Calu3 (cell line): ENCODE measurements at regions of chr22 and their contacts with region 1.

Region 1: GRCh38 chr22:24175160-24175808 is 6.0 kb upstream of the SUSD2 start:
- DNase-seq: peak; percentile 88
- H3K4me3 Mint-ChIP-seq: no peak overlapping the region
- H3K27ac Mint-ChIP-seq: no peak overlapping the region
- H3K4me1 Mint-ChIP-seq: no peaks in the 10 kb centered on the region
- H3K27me3 Mint-ChIP-seq: no peaks in the 10 kb centered on the region
- CTCF ChIP-seq: peak; percentile 90

Region 2: DNA sequence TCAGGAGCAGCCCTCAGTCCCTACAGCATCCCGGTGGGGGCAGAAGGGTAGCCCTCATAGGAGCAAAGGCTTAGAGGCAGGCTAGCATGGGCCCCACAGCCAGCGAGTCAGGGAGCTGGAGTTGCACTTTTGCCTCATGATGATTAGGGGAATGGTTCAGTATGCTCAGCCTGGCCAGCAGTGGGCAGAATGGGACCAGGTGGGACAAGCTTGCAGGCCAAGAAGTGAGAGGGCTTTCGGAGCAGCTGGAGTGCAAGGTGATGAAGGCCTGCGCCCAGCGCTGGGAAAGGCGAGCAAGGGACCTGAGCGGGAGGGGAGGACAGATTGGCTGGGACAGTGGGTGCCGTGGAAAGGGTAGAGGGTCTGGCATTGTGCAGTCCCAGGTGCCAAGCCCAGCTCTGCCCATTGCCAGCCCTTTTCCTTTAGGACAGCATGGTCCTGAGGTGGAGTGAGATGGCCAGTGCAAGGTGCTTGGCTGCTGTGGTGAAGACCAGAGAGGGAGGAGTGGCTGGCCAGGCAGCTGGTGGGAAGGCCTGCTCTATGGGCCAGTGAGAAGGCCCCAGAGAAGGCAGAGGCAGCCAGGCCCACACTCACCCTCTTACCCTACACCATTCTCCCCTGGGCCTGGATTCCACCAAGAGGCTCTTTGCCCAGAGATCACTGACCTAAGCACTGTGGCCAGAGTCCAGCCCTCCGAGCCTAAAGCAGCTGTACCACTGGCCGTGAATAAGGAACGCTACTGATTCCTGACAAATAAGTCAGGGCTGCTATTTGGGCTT is 41.9 kb before region 1 on chr22:
- CTCF ChIA-PET with region 1: interaction called, 11 read pairs
- intact Hi-C with region 1: no loop called
- DNase-seq: no peak
- H3K4me3 Mint-ChIP-seq: no peak overlapping the region
- H3K27ac Mint-ChIP-seq: no peak overlapping the region
- H3K4me1 Mint-ChIP-seq: no peaks in the 10 kb centered on the region
- H3K27me3 Mint-ChIP-seq: no peaks in the 10 kb centered on the region
- CTCF ChIP-seq: no peak

Region 3: GRCh38 chr22:24156913-24157821 is 18.1 kb before region 1 on chr22:
- CTCF ChIA-PET with region 1: interaction called, 15 read pairs
- intact Hi-C with region 1: no loop called
- DNase-seq: peak; percentile 93
- H3K4me3 Mint-ChIP-seq: peak overlapping the region; percentile 84
- H3K27ac Mint-ChIP-seq: no peak overlapping the region
- H3K4me1 Mint-ChIP-seq: peaks cover 9% of the 10 kb centered on the region
- H3K27me3 Mint-ChIP-seq: no peaks in the 10 kb centered on the region
- CTCF ChIP-seq: peak; percentile 93